IMR-90 (cell line): ENCODE measurements at regions of chr16 and their contacts with region 1.

Region 1: DNA sequence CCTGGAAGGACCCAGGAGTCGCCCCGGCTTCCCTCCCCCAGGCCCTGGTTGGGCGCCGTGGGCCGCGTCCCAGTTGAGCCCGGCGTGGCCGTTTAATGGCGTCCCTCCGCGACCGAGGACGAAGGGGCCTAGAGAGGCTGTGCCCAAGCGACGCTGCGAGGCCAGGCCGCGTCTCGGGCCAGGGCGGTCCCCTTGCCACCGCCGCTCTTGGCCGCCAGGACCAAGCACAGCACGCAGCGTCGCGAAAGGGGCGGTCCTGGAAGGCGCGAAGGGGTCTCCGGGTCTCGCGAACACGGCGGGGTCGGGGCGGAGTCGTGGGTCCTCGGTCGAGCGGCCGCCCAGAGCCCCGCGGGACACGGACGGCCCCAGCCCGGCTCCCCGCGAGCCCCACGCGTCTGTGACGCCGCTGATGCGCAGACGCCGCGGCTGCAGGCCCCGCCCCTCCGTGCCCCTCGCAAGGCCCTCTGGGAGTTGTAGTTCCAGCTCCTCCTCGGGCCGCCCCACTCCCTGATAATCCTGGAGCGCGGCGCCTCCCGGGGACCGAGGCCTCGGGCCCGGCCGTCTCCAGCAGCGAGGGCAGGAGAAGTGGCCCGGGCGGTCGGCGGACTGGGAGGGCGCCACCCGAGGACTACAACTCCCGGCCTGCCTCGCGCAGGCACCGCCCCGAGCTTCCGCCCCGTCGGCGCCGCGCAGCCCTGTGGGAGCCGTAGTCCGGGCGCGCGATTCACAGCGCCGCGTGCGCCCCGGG is at the start of gene CAPN15:
- DNase-seq: peak; percentile 79
- ATAC-seq: peak; percentile 79
- H3K4me3 ChIP-seq: peak within 1 kb of the TSS; percentile 89
- H3K27ac ChIP-seq: peak within 1 kb of the TSS; percentile 98
- H3K4me1 ChIP-seq: peaks cover 21% of the 10 kb centered on the region
- H3K27me3 ChIP-seq: no peaks in the 10 kb centered on the region
- CTCF ChIP-seq: no peak; the same call in 1 of the 2 replicates
- POLR2A ChIP-seq: peak; percentile 71
- RAD21 ChIP-seq: no peak
- total RNA-seq, gene CAPN15: 9.3 and 11.4 TPM in 2 replicates

Region 2: DNA sequence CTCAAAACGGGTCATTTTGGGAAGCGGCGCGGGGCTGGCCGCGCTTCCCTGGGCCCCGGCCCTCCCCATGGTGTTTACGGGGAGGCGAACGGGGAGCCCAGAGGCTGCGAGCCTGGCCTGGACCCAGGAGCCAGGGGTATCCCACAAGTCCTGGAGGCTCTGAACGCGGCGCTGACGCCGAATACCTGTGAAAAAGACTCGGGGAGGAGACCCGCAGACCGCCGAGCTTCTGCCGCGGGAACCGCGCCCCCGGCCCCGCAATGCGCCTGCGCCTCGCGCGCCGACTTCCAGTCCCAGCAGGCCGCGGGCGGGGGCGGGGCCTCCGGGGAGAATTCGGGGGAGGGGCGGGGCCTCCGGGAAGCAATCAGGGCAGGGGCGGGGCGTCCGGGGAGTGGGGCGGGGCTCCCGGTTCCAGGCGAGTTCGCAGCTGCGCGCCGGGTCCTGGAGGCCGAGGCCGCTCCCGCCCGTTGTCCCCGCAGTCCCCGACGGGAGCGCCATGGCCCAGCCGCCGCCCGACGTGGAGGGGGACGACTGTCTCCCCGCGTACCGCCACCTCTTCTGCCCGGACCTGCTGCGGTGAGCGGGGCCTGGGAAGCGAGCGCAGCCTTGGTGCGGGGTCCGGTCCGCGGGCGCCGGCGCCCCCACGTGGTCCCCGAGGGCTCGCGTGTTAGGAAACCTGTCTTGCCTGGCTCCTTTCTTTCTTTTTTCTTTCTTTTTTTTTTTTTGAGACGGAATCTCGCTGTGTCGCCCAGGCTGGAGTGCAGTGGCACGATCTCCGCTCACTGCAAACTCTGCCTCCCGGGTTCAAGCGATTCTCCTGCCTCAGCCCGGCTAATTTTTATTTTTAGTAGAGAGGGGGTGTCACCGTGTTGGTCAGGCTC is 125.5 kb before region 1 on chr16 and contains the start of gene DECR2:
- CTCF ChIA-PET with region 1: no interaction called
- POLR2A ChIA-PET with region 1: no interaction called
- dilution Hi-C with region 1: no loop called
- in situ Hi-C with region 1: no loop called
- intact Hi-C with region 1: loop called (anchors 5 kb)
- DNase-seq: peak; percentile 85
- ATAC-seq: peak; percentile 88
- H3K4me3 ChIP-seq: peak within 1 kb of the TSS; percentile 95
- H3K27ac ChIP-seq: peak within 1 kb of the TSS; percentile 90
- H3K4me1 ChIP-seq: peaks cover 4% of the 10 kb centered on the region
- H3K27me3 ChIP-seq: no peaks in the 10 kb centered on the region
- CTCF ChIP-seq: peak; percentile 53
- POLR2A ChIP-seq: peak; percentile 50; the same call in 1 of the 2 replicates
- RAD21 ChIP-seq: peak; percentile 59
- total RNA-seq, gene DECR2: 3.9 TPM in 2 replicates

Region 3: DNA sequence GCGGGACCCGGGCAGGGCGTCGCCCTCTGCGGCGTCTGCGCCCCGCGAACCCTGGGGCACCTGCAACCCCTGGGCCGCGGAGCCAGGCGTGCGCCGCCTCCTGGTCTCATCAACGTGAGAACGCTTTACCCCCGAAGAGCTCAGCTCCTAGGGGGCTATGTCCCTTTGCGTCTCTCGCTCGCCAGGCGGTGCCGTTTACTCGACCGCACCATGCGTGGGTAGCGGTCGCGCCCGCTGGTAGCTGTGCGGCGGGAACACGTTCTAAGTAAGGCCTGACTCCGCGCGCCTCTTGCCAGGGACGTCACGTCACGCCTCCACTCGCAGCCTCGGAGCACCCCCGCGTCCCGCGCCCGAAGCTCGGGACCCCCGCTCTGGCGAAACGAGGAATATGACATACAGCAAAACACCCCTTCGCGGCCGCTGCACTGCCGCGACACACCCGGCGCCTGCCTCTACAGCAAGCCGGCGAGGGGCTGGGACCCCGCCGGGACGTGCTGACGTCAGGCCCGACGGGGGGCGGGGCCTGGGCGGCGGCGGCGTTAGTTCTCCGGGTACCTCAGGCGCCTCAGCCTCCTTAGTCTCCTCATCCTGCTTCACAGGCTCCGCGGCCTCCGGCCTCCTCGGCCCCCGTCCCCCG is 102.0 kb before region 1 on chr16 and contains the start of gene RAB11FIP3:
- CTCF ChIA-PET with region 1: no interaction called
- POLR2A ChIA-PET with region 1: no interaction called
- dilution Hi-C with region 1: no loop called
- in situ Hi-C with region 1: no loop called
- intact Hi-C with region 1: loop called (anchors 2 kb)
- DNase-seq: peak; percentile 77
- ATAC-seq: peak; percentile 86
- H3K4me3 ChIP-seq: peak within 1 kb of the TSS; percentile 65
- H3K27ac ChIP-seq: peak within 1 kb of the TSS; percentile 69
- H3K4me1 ChIP-seq: peaks cover 13% of the 10 kb centered on the region
- H3K27me3 ChIP-seq: no peaks in the 10 kb centered on the region
- CTCF ChIP-seq: peak; percentile 10; the same call in 1 of the 2 replicates
- POLR2A ChIP-seq: peak; percentile 62
- RAD21 ChIP-seq: no peak
- total RNA-seq, gene RAB11FIP3: 7.5 TPM in 2 replicates

Region 4: GRCh38 chr16:636206-637080 is 109.3 kb after region 1 on chr16 and contains the start of gene METTL26:
- CTCF ChIA-PET with region 1: no interaction called
- POLR2A ChIA-PET with region 1: no interaction called
- dilution Hi-C with region 1: no loop called
- in situ Hi-C with region 1: no loop called
- intact Hi-C with region 1: loop called (anchors 5 kb)
- DNase-seq: peak; percentile 91
- ATAC-seq: peak; percentile 86
- H3K4me3 ChIP-seq: peak within 1 kb of the TSS; percentile 97
- H3K27ac ChIP-seq: peak within 1 kb of the TSS; percentile 94
- H3K4me1 ChIP-seq: peaks cover 11% of the 10 kb centered on the region
- H3K27me3 ChIP-seq: no peaks in the 10 kb centered on the region
- CTCF ChIP-seq: peak; percentile 12; the same call in 1 of the 2 replicates
- POLR2A ChIP-seq: peak; percentile 69; the same call in 1 of the 2 replicates
- RAD21 ChIP-seq: peak; percentile 22
- total RNA-seq, gene METTL26: 40.8 and 46.8 TPM in 2 replicates